HepG2 (cell line): ENCODE measurements at regions of chr20 and their contacts with region 1.

Region 1: DNA sequence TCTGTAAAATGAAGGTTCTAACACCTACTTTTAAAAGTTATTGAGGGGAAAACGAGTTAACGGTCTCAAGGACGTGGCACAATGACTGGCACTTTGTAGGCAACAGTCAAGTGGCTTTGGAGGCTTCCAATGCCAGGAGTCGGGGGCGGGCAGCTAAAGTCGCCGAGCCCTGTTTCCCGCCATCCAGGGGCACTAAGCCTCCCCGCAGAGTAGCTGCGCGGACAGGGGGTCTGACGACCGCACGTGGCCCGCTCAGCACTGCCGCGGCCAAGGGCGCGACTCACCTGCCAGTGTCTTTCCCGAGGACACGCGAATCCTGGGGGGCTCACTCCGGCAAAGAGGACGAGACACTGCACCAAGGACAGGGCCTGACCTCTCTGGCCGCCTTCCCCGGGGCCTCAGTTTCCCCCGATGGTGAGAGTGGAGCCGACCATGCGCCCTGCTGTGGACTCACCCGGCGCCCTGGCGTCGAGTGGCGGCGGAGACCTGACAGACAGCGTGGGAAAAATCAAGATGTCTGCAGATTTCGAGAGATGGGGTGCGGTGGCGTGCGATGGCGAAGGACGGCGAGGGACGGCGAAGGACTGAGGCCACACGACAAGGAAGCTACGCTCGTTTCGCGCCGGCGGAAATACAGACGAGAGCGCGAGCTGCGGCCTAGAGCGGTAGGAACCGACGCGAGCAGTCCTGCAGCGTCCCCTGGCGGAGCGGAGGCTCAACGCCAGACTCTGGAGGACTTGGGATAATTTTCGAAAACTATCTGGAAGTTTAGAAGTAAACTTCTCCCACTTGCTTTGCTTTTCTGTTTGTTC is at the start of gene SNHG17:
- DNase-seq: peak; percentile 95
- ATAC-seq: peak; percentile 87
- H3K4me3 ChIP-seq: peak within 1 kb of the TSS; percentile 77 to 87 (median 81)
- H3K27ac ChIP-seq: peak within 1 kb of the TSS; percentile 80
- H3K4me1 ChIP-seq: peaks cover 42% of the 10 kb centered on the region
- H3K27me3 ChIP-seq: peaks cover 0 to 4% of the 10 kb centered on the region in 2 experiments; a peak in 1 of 5 replicates
- CTCF ChIP-seq: peak; percentile 100
- EP300 ChIP-seq: peak; percentile 55; a peak in 3 of 4 replicates
- POLR2A ChIP-seq: peak; percentile 99 to 100
- RAD21 ChIP-seq: peak; percentile 88
- total RNA-seq, gene SNHG17: 15.6 and 26.2 TPM in 2 replicates

Region 2: DNA sequence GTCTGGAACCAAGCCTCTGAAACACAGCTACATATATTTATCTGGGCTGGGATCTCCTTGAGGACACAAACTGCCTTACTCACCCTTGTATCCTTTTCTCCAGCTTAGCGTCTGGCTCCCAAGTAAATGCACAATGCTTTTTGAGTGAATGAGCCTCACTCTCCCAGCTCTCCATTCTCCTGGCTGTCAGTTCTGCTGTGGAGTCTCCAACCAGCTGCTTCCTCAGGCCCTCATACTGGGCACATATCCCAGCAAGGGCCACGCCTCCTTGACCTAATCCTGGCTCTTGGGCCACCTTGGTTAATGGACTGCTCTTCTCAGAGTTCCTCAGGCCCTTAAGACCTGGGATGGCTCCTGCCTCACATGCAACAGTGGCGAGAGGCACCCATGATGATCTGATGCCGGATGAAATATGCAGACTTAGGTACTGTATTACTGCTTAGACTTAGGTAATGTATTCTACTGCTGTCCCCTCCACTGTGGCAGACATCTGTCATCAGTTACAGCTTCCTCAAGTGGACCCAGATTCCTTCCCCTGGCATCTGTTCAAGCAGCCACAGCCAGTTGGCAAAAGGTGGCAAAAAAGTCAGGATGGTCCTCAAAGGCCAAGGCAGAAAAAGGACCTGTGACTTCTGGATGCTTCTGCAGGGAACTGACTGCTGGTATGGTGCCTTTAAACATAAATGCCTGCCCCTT is 16.3 kb before region 1 on chr20:
- CTCF ChIA-PET with region 1: no interaction called
- POLR2A ChIA-PET with region 1: interaction called, 48 read pairs
- in situ Hi-C with region 1: no loop called
- intact Hi-C with region 1: no loop called
- DNase-seq: no peak
- ATAC-seq: peak; percentile 7
- H3K4me3 ChIP-seq: no peak overlapping the region
- H3K27ac ChIP-seq: no peak overlapping the region
- H3K4me1 ChIP-seq: no peaks in the 10 kb centered on the region
- H3K27me3 ChIP-seq: no peaks in the 10 kb centered on the region
- CTCF ChIP-seq: no peak
- EP300 ChIP-seq: no peak
- POLR2A ChIP-seq: peak in 1 of 2 experiments; percentile 56; a peak in 3 of 4 replicates
- RAD21 ChIP-seq: no peak

Region 3: GRCh38 chr20:38446441-38447209 is 11.7 kb after region 1 on chr20:
- CTCF ChIA-PET with region 1: interaction called, 314 read pairs
- POLR2A ChIA-PET with region 1: interaction called, 294 read pairs
- in situ Hi-C with region 1: no loop called
- intact Hi-C with region 1: loop called (anchors 1 kb)
- DNase-seq: peak; percentile 90
- ATAC-seq: peak; percentile 82
- H3K4me3 ChIP-seq: peak overlapping the region; percentile 86 to 99 (median 95)
- H3K27ac ChIP-seq: peak overlapping the region; percentile 78
- H3K4me1 ChIP-seq: peaks cover 42% of the 10 kb centered on the region
- H3K27me3 ChIP-seq: no peaks in the 10 kb centered on the region; a peak in 1 of 5 replicates
- CTCF ChIP-seq: peak; percentile 99
- EP300 ChIP-seq: peak; percentile 45 to 68; a peak in 3 of 4 replicates
- POLR2A ChIP-seq: peak; percentile 94 to 98
- RAD21 ChIP-seq: peak; percentile 94

Region 4: DNA sequence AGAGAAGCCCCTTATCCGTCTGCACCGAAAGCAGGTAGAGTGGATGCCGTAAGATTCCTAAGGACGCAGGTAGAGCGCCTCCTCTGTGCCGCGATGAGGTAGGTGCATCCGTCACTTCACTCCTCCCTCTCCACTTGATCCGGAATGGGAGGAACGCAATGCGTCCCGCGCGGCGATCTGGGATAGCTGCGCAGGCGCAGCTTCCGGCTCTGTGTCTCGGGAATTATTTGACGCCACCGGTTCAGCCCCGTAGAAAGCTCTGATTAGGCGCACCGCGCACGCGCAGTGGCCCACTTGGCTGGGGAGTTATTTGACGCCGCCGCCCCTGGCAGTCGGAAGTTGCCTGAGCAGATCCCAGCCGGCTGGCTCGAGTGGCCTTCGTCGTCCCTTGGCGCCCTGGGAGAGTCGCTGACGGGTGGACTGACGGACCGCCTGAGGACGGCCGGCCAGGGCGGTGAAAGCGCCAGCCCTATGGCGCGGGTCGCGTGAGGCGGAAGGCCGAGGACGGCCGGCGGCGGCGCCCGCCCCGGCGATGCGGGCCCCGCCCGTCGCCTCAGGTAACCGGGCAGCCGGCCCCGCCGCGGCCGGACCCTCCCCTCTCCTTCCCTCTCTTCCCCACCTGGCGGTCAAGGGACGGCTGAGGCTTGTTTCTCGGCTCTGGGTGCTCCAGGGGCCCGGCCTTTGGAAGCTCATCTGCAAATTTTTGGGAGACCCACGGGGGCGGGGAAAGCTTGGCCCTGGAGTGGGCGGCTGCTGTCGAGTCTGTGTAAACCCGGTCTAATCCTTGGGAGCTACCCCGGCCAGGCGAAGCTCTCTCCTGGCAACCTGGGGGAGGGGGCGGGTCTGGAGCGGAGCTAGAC is 37.8 kb after region 1 on chr20 and contains the start of gene RALGAPB:
- CTCF ChIA-PET with region 1: interaction called, 20 read pairs
- POLR2A ChIA-PET with region 1: interaction called, 87 read pairs
- in situ Hi-C with region 1: loop called (anchors 5 kb)
- intact Hi-C with region 1: loop called (anchors 1 kb)
- DNase-seq: peak; percentile 100
- ATAC-seq: peak; percentile 93
- H3K4me3 ChIP-seq: peak within 1 kb of the TSS; percentile 76 to 96 (median 90)
- H3K27ac ChIP-seq: peak within 1 kb of the TSS; percentile 67
- H3K4me1 ChIP-seq: peaks cover 43% of the 10 kb centered on the region
- H3K27me3 ChIP-seq: no peaks in the 10 kb centered on the region; a peak in 1 of 5 replicates
- CTCF ChIP-seq: peak; percentile 96
- EP300 ChIP-seq: peak in 1 of 2 experiments; percentile 28; a peak in 2 of 4 replicates
- POLR2A ChIP-seq: peak; percentile 82 to 92
- RAD21 ChIP-seq: peak; percentile 63
- total RNA-seq, gene RALGAPB: 30.6 and 36.5 TPM in 2 replicates

Region 5: DNA sequence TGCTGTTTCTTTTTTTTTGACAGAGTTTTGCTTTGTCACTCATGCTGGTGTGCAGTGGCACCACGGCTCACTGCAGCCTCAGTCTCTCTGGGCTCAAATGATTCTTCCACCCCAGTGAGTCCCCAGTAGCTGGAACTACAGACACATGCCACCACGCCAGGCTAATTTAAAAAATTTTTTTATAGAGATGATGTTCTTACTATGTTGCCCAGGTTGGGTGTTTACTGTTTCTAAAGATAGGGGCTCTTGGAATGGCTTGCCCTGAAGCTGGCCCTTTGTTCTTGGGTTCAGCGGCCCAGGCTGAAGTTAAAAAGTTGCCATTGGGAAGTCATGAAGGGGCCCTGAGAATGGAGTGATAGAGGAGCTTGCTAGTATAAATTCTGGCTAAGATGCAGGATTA is 54.2 kb after region 1 on chr20:
- CTCF ChIA-PET with region 1: no interaction called
- POLR2A ChIA-PET with region 1: no interaction called
- in situ Hi-C with region 1: no loop called
- intact Hi-C with region 1: no loop called
- DNase-seq: no peak
- ATAC-seq: no peak
- H3K4me3 ChIP-seq: no peak overlapping the region
- H3K27ac ChIP-seq: no peak overlapping the region
- H3K4me1 ChIP-seq: no peaks in the 10 kb centered on the region
- H3K27me3 ChIP-seq: no peaks in the 10 kb centered on the region
- CTCF ChIP-seq: no peak
- EP300 ChIP-seq: no peak
- POLR2A ChIP-seq: no peak
- RAD21 ChIP-seq: no peak

Region 6: DNA sequence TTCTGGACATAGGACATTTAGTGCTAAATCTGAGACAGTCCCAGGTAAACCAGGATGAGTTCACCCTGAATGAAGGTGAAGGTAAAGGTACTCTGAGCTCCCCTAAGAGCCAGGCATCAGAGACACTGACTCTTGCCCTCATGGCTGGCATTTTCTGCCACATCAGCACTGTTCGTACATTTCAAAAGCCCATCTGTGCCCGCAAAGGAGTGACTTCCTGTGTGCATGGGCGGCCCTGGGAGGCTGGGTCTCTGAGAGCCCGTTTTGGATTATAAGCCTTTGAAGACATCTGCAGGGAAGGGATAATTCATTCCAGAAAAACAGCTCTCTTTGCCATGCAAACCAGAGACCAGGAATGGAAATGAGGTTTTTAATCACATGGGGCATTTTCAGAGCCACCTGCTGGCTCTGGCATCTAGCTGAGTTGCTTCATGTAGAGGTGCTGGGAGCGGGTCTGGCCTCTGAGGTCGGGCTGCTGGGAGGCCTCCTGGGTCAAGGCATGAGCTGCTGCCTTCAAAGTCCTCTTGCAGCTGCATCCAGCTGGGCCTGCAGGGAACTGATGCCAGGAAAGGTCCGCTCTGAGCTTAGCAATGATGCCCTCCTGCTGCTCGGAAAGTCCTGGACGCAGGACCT is 875.5 kb after region 1 on chr20:
- CTCF ChIA-PET with region 1: no interaction called
- POLR2A ChIA-PET with region 1: no interaction called
- in situ Hi-C with region 1: no loop called
- intact Hi-C with region 1: loop called (anchors 10 kb)
- DNase-seq: no peak
- ATAC-seq: no peak
- H3K4me3 ChIP-seq: no peak overlapping the region
- H3K27ac ChIP-seq: no peak overlapping the region
- H3K4me1 ChIP-seq: no peaks in the 10 kb centered on the region
- H3K27me3 ChIP-seq: peaks cover 0 to 5% of the 10 kb centered on the region in 2 experiments; a peak in 2 of 5 replicates
- CTCF ChIP-seq: no peak
- EP300 ChIP-seq: no peak
- POLR2A ChIP-seq: no peak
- RAD21 ChIP-seq: no peak